Gastrocnemius medialis (tissue), 4 donors: ENCODE measurements at regions of chr4 and their contacts with region 1.

Region 1: DNA sequence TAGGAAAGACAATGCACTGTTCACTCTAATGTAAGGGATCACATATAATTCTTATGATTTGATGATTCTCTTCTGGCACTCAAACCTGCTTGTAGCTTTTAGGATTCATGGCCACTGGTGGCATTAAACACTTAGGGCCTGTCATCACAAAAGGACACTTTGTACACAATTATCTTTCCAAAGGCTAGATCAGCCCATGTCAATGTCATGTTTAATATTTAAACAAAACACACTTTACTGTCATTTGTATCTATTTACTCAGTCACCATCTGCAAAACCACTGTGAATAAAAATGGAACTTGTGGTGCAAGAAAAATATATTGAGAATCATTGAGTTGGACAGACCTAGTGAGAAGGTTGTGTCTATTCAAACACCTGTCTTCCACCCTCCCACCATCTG is 83.6 kb upstream of the TTC29 start:
- DNase-seq: no peak
- ATAC-seq: no peak
- H3K4me3 ChIP-seq: no peak overlapping the region
- H3K27ac ChIP-seq: no peak overlapping the region
- H3K4me1 ChIP-seq: no peaks in the 10 kb centered on the region
- H3K27me3 ChIP-seq: no peaks in the 10 kb centered on the region
- CTCF ChIP-seq: no peak
- POLR2A ChIP-seq: no peak

Region 2: GRCh38 chr4:147088146-147088545 is 58.9 kb after region 1 on chr4:
- in situ Hi-C with region 1: loop called in 2 of 4 experiments (anchors 10 kb)
- intact Hi-C with region 1: no loop called
- DNase-seq: no peak
- ATAC-seq: no peak
- H3K4me3 ChIP-seq: no peak overlapping the region
- H3K27ac ChIP-seq: no peak overlapping the region
- H3K4me1 ChIP-seq: no peaks in the 10 kb centered on the region
- H3K27me3 ChIP-seq: no peaks in the 10 kb centered on the region
- CTCF ChIP-seq: no peak
- POLR2A ChIP-seq: no peak